ENCODE measurements at regions of chr6 and their contacts with region 1.

Region 1: GRCh38 chr6:15776458-15776980 is 113.7 kb upstream of the DTNBP1 start:
- DNase-seq: peak; percentile 71
- H3K4me3 Mint-ChIP-seq: no peak overlapping the region
- H3K27ac Mint-ChIP-seq: peak overlapping the region; percentile 88
- H3K4me1 Mint-ChIP-seq: peaks cover 68% of the 10 kb centered on the region
- H3K27me3 Mint-ChIP-seq: peaks cover 3% of the 10 kb centered on the region

Region 2: DNA sequence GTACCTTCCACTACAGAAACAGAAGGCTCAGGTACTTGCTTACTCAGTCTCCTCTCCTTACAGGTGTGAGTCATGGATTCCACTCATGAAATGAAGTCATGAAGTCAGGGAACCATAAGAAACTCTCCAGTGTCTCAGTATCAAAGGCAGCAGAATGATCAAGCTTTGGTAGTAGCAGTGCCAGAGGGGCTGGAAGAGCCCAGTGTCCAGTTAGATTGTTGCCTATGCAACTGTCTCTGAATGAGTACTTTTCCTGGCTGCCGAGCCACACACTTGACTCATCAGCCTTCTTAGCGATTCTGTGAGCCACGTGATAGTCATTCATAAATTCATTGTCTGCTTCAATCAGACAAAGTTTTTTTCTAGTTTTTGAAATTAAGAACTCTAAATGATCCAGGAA is 61.5 kb before region 1 on chr6:
- CTCF ChIA-PET with region 1: no interaction called
- POLR2A ChIA-PET with region 1: no interaction called
- intact Hi-C with region 1: loop called (anchors 1 kb)
- DNase-seq: peak; percentile 70
- H3K4me3 Mint-ChIP-seq: no peak overlapping the region
- H3K27ac Mint-ChIP-seq: peak overlapping the region; percentile 54
- H3K4me1 Mint-ChIP-seq: peaks cover 21% of the 10 kb centered on the region
- H3K27me3 Mint-ChIP-seq: peaks cover 14% of the 10 kb centered on the region

Region 3: GRCh38 chr6:15879382-15880261 is 103.1 kb after region 1 on chr6:
- CTCF ChIA-PET with region 1: interaction called, 5 read pairs
- POLR2A ChIA-PET with region 1: interaction called, 12 read pairs
- intact Hi-C with region 1: loop called (anchors 1 kb)
- DNase-seq: peak; percentile 85
- H3K4me3 Mint-ChIP-seq: peak overlapping the region; percentile 33
- H3K27ac Mint-ChIP-seq: peak overlapping the region; percentile 76
- H3K4me1 Mint-ChIP-seq: peaks cover 42% of the 10 kb centered on the region
- H3K27me3 Mint-ChIP-seq: peaks cover 4% of the 10 kb centered on the region

Region 4: DNA sequence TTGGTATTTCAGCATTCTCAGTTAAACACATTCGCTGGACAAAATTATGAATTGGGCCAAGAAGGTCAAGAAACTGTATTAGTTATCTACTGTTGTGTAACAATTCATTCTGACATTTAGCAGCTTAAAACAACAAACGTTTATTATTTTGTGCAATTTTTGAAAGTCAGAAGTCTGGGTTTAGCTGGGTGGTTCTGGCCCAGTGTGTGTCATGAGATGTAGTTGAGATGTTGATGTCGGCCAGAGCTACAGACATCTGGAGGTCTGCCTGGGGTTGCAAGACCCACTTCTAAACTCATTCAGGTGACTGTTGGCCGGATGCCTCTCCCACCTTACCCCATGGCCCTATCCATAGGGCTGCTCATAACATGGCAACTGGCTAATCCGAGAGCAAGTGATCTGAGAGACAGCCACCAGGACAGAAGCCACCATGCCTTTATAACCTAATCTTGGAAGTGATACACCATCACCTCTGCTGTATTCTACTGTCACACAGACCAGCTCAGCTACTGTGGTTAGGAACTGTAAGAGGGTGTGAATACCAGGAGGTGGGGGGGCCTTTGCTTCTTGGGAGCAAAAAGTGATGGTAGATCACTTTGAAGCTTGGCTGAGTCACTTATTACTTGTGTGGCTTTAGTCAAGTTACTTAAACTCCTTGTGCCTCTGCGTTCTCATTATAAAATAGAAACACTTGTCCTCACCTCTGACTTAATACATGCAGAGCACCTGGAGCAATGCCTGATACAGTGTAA is 135.4 kb after region 1 on chr6:
- CTCF ChIA-PET with region 1: interaction called, 4 read pairs
- POLR2A ChIA-PET with region 1: interaction called, 3 read pairs
- intact Hi-C with region 1: loop called (anchors 1 kb)
- DNase-seq: peak; percentile 67
- H3K4me3 Mint-ChIP-seq: no peak overlapping the region
- H3K27ac Mint-ChIP-seq: no peak overlapping the region
- H3K4me1 Mint-ChIP-seq: peaks cover 32% of the 10 kb centered on the region
- H3K27me3 Mint-ChIP-seq: no peaks in the 10 kb centered on the region

Region 5: GRCh38 chr6:16136621-16137450 is 360.3 kb after region 1 on chr6:
- CTCF ChIA-PET with region 1: interaction called, 6 read pairs
- POLR2A ChIA-PET with region 1: no interaction called
- intact Hi-C with region 1: loop called (anchors 1 kb)
- DNase-seq: peak; percentile 75
- H3K4me3 Mint-ChIP-seq: peak overlapping the region; percentile 46
- H3K27ac Mint-ChIP-seq: peak overlapping the region; percentile 86
- H3K4me1 Mint-ChIP-seq: peaks cover 76% of the 10 kb centered on the region
- H3K27me3 Mint-ChIP-seq: no peaks in the 10 kb centered on the region

Measured in activated CD4-positive, alpha-beta memory T cell treated with anti-CD3 and anti-CD28 coated beads for 36 hours (primary cell).